Lower leg skin (tissue), 4 donors: ENCODE measurements at regions of chr18 and their contacts with region 1.

Region 1: GRCh38 chr18:75742516-75742915 is 315.0 kb upstream of the SMIM21 start:
- DNase-seq: no peak
- H3K4me3 ChIP-seq: no peak overlapping the region
- CTCF ChIP-seq: no peak
- POLR2A ChIP-seq: no peak

Region 2: DNA sequence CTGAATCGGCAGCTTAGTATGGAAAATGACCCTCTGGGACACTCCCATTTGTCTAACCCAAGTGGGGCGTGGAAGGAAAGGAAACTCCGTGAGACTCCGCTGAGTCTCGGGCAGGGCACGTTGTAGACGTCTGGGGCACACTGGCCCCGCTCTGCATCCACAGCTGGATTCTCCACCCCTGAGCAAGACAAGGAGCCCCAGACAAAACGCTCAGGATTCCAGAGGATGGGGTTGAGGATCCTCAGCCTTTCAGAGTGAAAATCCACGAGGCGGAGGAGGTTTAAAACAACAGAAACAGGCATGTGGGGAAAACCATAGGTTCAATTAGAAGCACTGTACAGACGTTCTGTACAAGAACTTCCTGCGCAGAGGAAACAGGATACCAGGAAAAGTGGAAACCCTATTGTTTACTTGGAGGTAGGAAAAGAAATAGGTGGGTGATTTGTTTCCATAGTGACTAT is 955.0 kb after region 1 on chr18:
- intact Hi-C with region 1: loop called (anchors 10 kb)
- DNase-seq: no peak
- H3K4me3 ChIP-seq: no peak overlapping the region
- CTCF ChIP-seq: no peak
- POLR2A ChIP-seq: no peak